Right lobe of liver (tissue), 6 donors: ENCODE measurements at regions of chr15 and their contacts with region 1.

Region 1: GRCh38 chr15:92665100-92665555 is 9.6 kb upstream of the FAM174B start:
- DNase-seq: no peak
- ATAC-seq: peak; percentile 26 to 78 (median 64)
- H3K4me3 ChIP-seq: no peak overlapping the region
- H3K27ac ChIP-seq: peak overlapping the region in 2 of 3 donors; percentile 10 to 11
- H3K4me1 ChIP-seq: peaks cover 0 to 29% (median 11%) of the 10 kb centered on the region in 4 donors
- H3K27me3 ChIP-seq: no peaks in the 10 kb centered on the region
- CTCF ChIP-seq: no peak
- POLR2A ChIP-seq: no peak

Region 2: DNA sequence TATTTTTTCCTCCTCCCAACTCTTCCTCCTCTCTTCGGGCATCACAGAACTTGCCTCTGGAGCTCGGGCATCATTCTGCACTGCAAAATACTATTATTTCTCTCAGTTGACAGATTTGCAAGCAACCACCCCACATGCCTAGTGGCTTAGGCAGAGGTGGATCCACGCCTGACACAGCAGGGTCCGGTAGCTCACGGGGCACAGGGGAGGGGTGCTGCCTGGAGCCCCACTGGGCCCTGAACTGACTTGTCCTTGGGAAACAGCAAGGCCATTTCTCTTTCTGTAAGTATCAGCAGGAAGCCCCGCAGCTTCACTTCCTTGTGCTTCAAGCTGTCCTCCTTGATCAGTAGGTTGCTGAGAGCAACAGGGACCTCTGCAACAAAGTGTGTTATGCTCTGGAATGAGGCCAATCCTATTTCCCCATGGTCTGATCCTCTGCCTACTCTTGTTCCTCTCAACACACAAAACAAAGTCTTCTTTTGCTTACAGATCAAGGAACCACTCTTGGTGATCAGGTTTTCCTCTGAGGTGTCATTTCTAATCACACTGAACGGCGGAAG is 78.7 kb before region 1 on chr15:
- intact Hi-C with region 1: no loop called
- DNase-seq: no peak
- ATAC-seq: peak; percentile 14 to 37 (median 25)
- H3K4me3 ChIP-seq: no peak overlapping the region
- H3K27ac ChIP-seq: no peak overlapping the region
- H3K4me1 ChIP-seq: no peaks in the 10 kb centered on the region
- H3K27me3 ChIP-seq: no peaks in the 10 kb centered on the region
- CTCF ChIP-seq: no peak
- POLR2A ChIP-seq: no peak

Region 3: DNA sequence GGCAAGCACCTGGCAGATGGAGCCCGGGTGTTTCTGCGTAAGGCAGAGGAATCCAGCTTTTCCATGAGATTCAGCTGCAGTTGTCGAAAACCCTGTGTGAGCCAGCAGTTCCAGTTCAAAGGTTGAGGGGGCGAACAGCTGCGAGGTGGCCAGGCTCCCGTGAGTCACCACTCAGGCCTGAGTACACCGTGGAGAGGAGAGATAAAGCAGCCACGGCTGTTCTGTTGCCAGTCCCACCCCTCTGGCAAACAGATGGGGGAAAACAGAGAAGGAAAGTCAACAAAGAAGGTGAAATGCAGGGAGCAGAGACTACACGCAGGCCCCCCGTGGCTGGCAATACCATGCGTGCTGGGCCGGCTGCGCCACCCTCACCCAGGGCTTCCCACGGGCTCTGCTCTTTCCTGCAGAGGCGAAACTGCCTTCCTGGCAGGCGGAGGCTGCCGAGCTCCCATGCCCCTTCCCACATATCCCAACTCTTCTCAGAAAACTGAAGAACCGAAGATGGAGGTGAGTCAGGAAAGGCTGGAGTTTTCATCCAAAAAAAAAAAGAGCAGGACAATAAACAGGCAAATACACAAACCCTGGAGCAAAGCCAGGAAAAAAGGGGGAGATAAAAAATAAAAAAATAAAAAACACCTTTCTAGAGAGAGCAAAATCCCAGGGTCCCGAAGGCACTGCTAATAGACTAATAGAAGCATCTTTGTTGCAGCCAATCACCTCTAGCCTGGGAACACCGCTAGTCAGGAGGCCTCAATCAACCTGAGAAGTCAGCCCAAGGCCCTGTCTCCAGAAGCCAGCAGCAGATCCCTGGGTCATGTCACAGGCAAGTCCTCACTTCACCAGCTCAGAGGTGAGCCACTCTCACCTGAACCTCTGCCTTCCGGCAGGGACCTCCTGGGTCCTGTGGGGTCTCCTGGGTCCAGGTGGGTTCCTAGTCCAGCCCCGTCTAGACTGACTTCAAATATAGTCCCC is 47.3 kb before region 1 on chr15:
- intact Hi-C with region 1: loop called in 1 of 2 experiments (anchors 10 kb)
- DNase-seq: peak; percentile 88 to 94 (median 91)
- ATAC-seq: peak; percentile 79 to 96 (median 89)
- H3K4me3 ChIP-seq: peak overlapping the region in 1 of 3 donors; percentile 28
- H3K27ac ChIP-seq: peak overlapping the region; percentile 72 to 96 (median 89)
- H3K4me1 ChIP-seq: peaks cover 0 to 41% (median 21%) of the 10 kb centered on the region in 4 donors
- H3K27me3 ChIP-seq: no peaks in the 10 kb centered on the region
- CTCF ChIP-seq: no peak
- POLR2A ChIP-seq: no peak

Region 4: DNA sequence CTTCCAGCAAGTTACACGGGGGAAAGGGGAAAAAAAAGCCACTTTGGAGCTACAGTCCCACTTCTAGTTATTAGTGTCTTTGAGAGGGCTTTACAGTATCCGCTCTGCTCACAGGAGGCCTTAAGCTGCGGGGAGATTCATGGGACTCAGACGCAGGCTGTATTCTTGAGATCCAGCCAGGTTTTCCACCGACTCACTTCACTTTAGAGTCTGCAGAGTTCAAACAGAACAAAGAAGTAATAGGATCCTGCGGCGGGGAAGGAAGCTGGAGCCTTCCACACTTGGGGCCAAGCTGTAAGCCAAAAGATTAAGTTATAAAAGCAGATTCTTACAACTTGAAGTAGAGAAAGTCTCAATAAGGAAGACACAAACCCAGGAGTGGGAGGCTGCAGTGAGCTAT is 50.6 kb after region 1 on chr15:
- intact Hi-C with region 1: no loop called
- DNase-seq: no peak
- ATAC-seq: no peak
- H3K4me3 ChIP-seq: no peak overlapping the region
- H3K27ac ChIP-seq: no peak overlapping the region
- H3K4me1 ChIP-seq: peaks cover 0 to 7% (median 0%) of the 10 kb centered on the region in 4 donors
- H3K27me3 ChIP-seq: no peaks in the 10 kb centered on the region
- CTCF ChIP-seq: no peak
- POLR2A ChIP-seq: no peak